ENCODE measurements at regions of chr19 and their contacts with region 1.

Region 1: DNA sequence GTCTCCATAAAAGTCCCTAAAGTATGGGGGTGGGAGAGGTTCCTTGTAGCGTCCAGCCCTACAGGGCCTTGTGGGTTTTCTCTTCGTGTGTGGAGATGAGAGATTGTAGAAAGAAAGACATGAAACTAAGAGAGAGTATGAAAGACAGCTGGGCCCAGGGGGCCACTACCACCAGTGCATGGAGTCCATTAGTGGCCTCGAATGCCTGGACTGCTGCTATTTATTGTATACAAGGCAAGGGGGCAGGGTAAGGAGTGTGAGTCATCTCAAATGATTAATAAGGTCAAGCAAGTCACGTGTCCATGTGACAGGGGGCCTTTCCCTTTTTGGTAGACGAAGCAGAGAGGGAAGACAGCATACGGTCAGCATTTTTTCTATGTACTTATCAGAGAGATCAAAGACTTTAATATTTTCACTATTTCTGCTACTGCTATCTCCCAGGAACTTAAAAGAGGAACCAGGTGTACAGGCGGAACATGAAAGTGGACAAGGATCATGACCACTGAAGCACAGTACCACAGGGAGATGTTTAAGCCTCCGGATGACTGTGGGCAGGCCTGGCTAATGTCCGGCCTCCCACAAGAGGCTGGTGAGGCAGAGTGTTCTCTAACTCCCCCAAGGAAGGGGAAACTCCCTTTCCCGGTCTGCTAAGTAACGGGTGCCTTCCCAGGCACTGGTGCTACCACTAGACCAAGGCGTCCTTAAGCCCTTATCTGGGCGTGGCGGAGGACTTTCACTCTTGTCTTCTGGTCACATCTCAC is 25.5 kb downstream of the FGF21 start:
- DNase-seq: no peak
- ATAC-seq: no peak
- H3K4me3 ChIP-seq: no peak overlapping the region
- H3K27ac ChIP-seq: peak overlapping the region; percentile 75 to 84 (median 81)
- H3K4me1 ChIP-seq: peaks cover 5 to 6% of the 10 kb centered on the region in 2 donors
- H3K27me3 ChIP-seq: no peaks in the 10 kb centered on the region
- CTCF ChIP-seq: no peak
- POLR2A ChIP-seq: peak in 1 of 2 donors; percentile 45

Region 2: GRCh38 chr19:48492925-48493717 is 287.7 kb before region 1 on chr19:
- in situ Hi-C with region 1: no loop called
- intact Hi-C with region 1: no loop called
- DNase-seq: peak; percentile 80 to 83
- ATAC-seq: peak; percentile 67 to 70
- H3K4me3 ChIP-seq: peak overlapping the region; percentile 51 to 63 (median 52)
- H3K27ac ChIP-seq: peak overlapping the region; percentile 6 to 68 (median 54)
- H3K4me1 ChIP-seq: peaks cover 3 to 8% of the 10 kb centered on the region in 2 donors
- H3K27me3 ChIP-seq: peaks cover 25 to 50% (median 40%) of the 10 kb centered on the region in 3 donors
- CTCF ChIP-seq: no peak
- POLR2A ChIP-seq: peak in 1 of 2 donors; percentile 39

Region 3: DNA sequence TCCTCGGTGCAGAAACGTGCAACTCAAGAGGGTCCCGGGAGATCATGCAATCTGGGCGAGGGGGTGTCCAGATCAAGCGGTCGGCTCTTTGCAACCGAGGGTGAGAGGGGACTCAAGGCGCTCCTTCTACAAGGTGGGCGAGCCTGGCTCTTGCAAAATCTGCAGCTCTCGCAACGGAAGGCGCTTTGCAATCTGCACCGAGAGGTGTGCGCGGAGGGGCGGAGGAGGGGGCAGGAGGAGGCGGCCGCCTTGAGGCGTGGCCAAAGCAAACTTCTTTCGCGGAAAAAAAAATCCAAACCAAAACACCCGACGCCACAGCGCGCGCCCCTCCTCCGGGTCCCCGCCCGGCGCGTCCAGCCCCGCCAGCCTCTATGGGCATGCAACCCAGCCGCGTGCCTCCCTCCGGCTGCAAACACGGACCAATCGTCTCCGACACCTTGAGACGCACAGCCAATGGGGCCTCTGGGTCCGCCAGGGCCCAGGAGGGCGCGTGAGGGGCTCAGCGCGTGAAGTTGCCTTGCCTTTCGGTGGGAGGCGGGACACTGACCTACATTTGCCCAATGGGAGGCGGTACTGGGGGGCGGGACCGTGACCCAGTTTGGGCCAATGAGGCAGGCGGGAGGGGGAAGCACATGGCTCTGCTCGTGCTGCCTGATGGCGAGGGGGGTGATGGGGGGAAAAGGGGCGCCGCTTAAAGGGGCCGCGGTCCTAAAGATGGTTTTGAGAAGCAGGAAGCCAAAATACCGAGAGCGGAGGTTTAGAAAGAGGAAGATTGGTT is 143.5 kb before region 1 on chr19 and contains the start of gene DBP:
- in situ Hi-C with region 1: no loop called
- intact Hi-C with region 1: loop called (anchors 2 kb)
- DNase-seq: peak; percentile 99 to 100
- ATAC-seq: peak; percentile 52 to 55
- H3K4me3 ChIP-seq: peak within 1 kb of the TSS; percentile 58 to 95 (median 76)
- H3K27ac ChIP-seq: peak within 1 kb of the TSS; percentile 97 to 100 (median 100)
- H3K4me1 ChIP-seq: peaks cover 37 to 46% of the 10 kb centered on the region in 2 donors
- H3K27me3 ChIP-seq: no peaks in the 10 kb centered on the region
- CTCF ChIP-seq: peak in 1 of 5 experiments; percentile 21
- POLR2A ChIP-seq: peak; percentile 59 to 76
- total RNA-seq, gene DBP: 1.7 to 12.9 (median 4.4) TPM

Region 4: DNA sequence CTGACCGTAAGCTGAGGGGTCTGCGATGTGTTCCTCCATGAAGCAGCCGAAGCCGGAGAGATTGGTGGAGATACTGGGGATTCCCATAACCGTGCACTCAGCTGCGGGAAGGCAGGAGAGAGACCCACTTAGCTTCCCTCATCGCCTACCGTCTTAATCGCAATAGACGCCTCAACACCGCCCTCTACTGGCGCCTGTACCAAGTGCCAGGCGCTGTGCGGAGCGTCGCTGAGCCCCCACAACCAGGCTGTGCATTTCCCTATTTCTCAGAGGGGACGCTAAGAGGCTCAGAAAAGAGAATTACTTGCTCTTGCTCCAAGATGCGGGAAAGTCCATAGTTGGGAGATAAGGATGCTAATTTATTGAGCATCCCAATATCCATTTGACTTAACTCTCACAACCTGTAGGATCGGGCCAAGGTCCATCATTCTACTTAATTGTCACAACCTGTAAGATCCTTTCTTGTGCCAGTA is 190.1 kb after region 1 on chr19:
- in situ Hi-C with region 1: loop called in 1 of 4 experiments (anchors 10 kb)
- intact Hi-C with region 1: no loop called
- DNase-seq: peak in 1 of 2 donors; percentile 69
- ATAC-seq: peak; percentile 48 to 51
- H3K4me3 ChIP-seq: no peak overlapping the region
- H3K27ac ChIP-seq: peak overlapping the region; percentile 48 to 100 (median 78)
- H3K4me1 ChIP-seq: peaks cover 18 to 28% of the 10 kb centered on the region in 2 donors
- H3K27me3 ChIP-seq: no peaks in the 10 kb centered on the region
- CTCF ChIP-seq: peak; percentile 81 to 91 (median 88)
- POLR2A ChIP-seq: no peak